ENCODE measurements at regions of chr5 and their contacts with region 1.

Region 1: GRCh38 chr5:89513299-89514044 is 630.5 kb upstream of the MEF2C start:
- DNase-seq: no peak
- ATAC-seq: no peak
- H3K4me3 ChIP-seq: no peak overlapping the region
- H3K27ac ChIP-seq: no peak overlapping the region
- H3K4me1 ChIP-seq: no peaks in the 10 kb centered on the region
- H3K27me3 ChIP-seq: no peaks in the 10 kb centered on the region
- CTCF ChIP-seq: no peak
- EP300 ChIP-seq: no peak
- POLR2A ChIP-seq: no peak
- RAD21 ChIP-seq: no peak

Region 2: GRCh38 chr5:89083791-89084190 is 429.7 kb before region 1 on chr5:
- CTCF ChIA-PET with region 1: no interaction called
- POLR2A ChIA-PET with region 1: no interaction called
- RAD21 ChIA-PET with region 1: no interaction called
- SMC1A ChIA-PET with region 1: no interaction called
- in situ Hi-C with region 1: no loop called
- intact Hi-C with region 1: no loop called
- DNase-seq: no peak
- ATAC-seq: no peak
- H3K4me3 ChIP-seq: no peak overlapping the region
- H3K27ac ChIP-seq: no peak overlapping the region
- H3K4me1 ChIP-seq: peaks cover 11% of the 10 kb centered on the region
- H3K27me3 ChIP-seq: no peaks in the 10 kb centered on the region
- CTCF ChIP-seq: no peak
- EP300 ChIP-seq: no peak
- POLR2A ChIP-seq: no peak
- RAD21 ChIP-seq: no peak

Region 3: DNA sequence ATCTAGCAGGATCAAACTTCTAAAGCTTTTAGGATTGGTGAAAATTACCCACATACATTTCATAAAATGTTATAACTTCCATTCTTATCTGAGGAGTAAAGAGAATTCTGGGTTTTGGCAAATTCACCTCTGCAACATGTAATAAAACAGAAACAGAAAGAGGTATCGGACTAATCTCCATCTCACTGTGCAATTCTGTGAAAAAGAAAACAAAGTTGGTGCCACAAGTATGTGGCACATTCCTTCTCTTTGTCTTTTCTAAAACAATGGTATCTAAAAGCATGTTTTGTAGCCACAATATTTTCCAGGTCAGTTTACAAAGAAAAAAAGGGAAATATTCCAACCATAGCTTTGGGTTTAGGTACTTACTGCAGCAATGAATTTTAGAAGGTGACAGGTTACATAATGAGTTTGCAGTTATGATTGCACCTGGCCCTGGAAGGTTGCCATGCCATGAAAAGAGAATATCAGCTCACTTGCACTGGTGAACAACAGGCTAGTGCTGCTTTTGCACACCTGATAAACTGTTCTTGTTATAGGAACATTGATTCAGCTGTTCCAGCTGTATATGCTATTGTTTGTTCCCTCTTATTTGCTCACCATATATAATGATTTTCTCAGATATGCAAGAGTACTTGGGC is 139.2 kb before region 1 on chr5:
- CTCF ChIA-PET with region 1: no interaction called
- POLR2A ChIA-PET with region 1: no interaction called
- RAD21 ChIA-PET with region 1: no interaction called
- SMC1A ChIA-PET with region 1: no interaction called
- in situ Hi-C with region 1: no loop called
- intact Hi-C with region 1: no loop called
- DNase-seq: no peak
- ATAC-seq: peak; percentile 32; the same call in 2 of the 3 replicates
- H3K4me3 ChIP-seq: peak overlapping the region; percentile 36
- H3K27ac ChIP-seq: no peak overlapping the region; the same call in 1 of the 2 replicates
- H3K4me1 ChIP-seq: peaks cover 4% of the 10 kb centered on the region
- H3K27me3 ChIP-seq: no peaks in the 10 kb centered on the region
- CTCF ChIP-seq: no peak
- EP300 ChIP-seq: no peak
- POLR2A ChIP-seq: no peak
- RAD21 ChIP-seq: no peak

Region 4: DNA sequence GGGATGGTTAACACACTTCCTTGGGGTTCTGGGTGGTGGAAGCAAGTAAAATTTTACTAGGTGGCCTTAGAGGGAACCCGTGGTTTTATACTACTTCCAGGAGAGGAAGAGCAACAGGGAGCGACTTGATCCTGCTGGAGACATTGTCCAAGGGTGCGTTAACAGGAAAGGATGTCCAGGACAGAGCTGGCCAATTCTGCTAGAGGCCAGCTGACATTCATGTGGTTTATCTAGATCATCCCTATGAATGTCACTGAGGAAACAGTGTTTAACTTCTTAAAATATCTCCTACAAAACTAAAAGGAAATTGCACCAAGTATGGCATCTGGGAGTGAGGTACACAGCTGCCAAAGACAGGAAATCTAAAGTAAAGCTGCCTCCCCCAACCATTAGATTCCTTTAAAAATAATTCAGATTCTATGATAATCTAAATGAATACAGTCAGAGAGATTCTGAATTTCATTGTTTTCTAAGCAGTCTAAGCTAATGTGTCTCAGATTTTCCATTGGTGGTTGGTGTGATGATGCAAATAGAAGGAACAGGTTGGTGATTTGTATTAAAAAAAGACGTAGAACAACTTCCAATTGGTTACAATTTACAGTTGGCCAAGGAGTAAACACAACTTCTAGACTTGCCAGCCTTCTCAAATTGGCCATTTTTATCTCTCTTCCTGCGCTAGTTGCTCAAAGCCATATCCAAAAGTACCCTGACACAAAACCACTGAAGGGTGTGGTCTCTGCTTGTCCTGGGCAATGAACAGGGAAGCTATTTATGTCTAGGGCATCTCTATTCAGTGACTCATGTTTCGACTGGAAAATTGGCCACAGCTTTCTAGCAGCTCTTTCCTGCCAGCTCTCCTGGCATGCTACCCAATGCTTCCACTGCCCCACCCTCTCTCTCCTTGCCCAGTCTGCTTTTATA is 55.8 kb before region 1 on chr5:
- CTCF ChIA-PET with region 1: no interaction called
- POLR2A ChIA-PET with region 1: no interaction called
- RAD21 ChIA-PET with region 1: no interaction called
- SMC1A ChIA-PET with region 1: no interaction called
- in situ Hi-C with region 1: no loop called
- intact Hi-C with region 1: no loop called
- DNase-seq: no peak
- ATAC-seq: no peak
- H3K4me3 ChIP-seq: no peak overlapping the region
- H3K27ac ChIP-seq: no peak overlapping the region
- H3K4me1 ChIP-seq: no peaks in the 10 kb centered on the region
- H3K27me3 ChIP-seq: no peaks in the 10 kb centered on the region
- CTCF ChIP-seq: no peak
- EP300 ChIP-seq: no peak
- POLR2A ChIP-seq: no peak
- RAD21 ChIP-seq: no peak

Region 5: GRCh38 chr5:89499787-89500186 is 13.7 kb before region 1 on chr5:
- CTCF ChIA-PET with region 1: no interaction called
- POLR2A ChIA-PET with region 1: no interaction called
- RAD21 ChIA-PET with region 1: no interaction called
- SMC1A ChIA-PET with region 1: interaction called, 11 read pairs
- in situ Hi-C with region 1: no loop called
- intact Hi-C with region 1: no loop called
- DNase-seq: no peak
- ATAC-seq: no peak
- H3K4me3 ChIP-seq: no peak overlapping the region
- H3K27ac ChIP-seq: no peak overlapping the region
- H3K4me1 ChIP-seq: no peaks in the 10 kb centered on the region
- H3K27me3 ChIP-seq: no peaks in the 10 kb centered on the region
- CTCF ChIP-seq: no peak
- EP300 ChIP-seq: no peak
- POLR2A ChIP-seq: no peak
- RAD21 ChIP-seq: no peak

Region 6: DNA sequence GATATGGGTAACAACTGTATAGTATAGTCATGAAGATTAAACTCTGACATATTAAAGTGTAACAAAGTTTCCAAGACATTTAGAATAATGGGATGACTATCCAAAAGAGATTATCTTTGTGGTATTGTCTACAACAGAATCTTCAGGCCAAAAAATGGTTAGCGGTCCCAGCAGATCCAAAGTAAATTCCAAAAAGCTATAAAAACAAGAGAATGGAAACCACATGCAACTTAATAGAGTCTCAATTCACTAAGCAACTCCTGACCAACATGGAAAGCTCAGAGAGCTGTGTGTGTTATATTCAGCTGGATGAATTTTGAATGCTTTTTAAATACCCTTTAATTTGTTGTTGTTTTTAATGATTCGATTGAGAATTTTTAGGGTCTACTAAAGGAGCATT is 207.9 kb after region 1 on chr5:
- CTCF ChIA-PET with region 1: no interaction called
- POLR2A ChIA-PET with region 1: no interaction called
- RAD21 ChIA-PET with region 1: no interaction called
- SMC1A ChIA-PET with region 1: no interaction called
- in situ Hi-C with region 1: no loop called
- intact Hi-C with region 1: no loop called
- DNase-seq: no peak
- ATAC-seq: no peak
- H3K4me3 ChIP-seq: no peak overlapping the region
- H3K27ac ChIP-seq: no peak overlapping the region
- H3K4me1 ChIP-seq: no peaks in the 10 kb centered on the region
- H3K27me3 ChIP-seq: no peaks in the 10 kb centered on the region
- CTCF ChIP-seq: no peak
- EP300 ChIP-seq: no peak
- POLR2A ChIP-seq: no peak
- RAD21 ChIP-seq: no peak

Measured in GM12878 (cell line).